Dendritic cell treated with granulocyte-macrophage colony-stimulating factor and Interleukin-4, amounts not matched to agents 40 ng/mL and 50 ng/mL, for 4 days (primary cell): ENCODE measurements at regions of chr17 and their contacts with region 1.

Region 1: DNA sequence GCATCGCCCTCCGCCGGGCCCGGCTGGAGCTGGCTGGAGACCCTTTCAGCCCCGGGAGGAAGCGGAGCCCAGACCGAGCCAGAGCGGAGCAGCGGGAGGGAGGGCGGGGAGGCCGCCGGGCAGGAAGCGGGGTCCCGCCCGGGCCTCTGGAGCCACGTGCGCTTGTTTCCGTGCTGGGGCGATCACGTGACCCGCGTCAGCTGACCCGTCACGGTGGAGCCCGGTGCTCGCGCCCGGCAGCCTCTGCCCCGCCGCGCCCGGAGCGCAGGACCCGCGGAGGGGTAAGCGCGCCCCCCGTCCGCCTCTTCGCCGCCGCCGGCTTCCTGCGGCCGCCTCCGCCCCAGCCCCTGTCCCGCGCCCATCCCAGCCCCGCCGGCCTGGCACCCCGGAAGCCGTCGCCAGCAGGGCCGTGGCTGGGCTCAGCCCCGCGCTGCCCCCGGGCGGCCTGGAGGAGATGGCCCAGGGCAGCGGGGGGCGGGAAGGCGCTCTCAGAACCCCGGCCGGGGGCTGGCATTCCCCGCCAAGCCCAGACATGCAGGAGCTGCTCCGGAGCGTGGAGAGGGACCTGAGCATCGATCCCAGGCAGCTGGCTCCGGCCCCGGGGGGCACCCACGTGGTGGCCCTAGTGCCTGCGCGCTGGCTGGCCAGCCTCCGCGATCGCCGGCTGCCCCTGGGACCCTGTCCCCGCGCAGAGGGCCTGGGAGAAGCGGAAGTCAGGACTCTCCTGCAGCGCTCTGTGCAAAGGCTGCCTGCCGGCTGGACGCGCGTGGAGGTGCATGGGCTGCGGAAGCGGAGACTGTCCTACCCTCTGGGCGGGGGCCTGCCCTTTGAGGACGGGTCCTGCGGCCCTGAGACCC is at the start of gene WDR81:
- H3K4me3 Mint-ChIP-seq: peak within 1 kb of the TSS; percentile 88
- H3K27ac Mint-ChIP-seq: peak within 1 kb of the TSS; percentile 88
- H3K4me1 Mint-ChIP-seq: peaks cover 78% of the 10 kb centered on the region
- H3K27me3 Mint-ChIP-seq: no peaks in the 10 kb centered on the region

Region 2: DNA sequence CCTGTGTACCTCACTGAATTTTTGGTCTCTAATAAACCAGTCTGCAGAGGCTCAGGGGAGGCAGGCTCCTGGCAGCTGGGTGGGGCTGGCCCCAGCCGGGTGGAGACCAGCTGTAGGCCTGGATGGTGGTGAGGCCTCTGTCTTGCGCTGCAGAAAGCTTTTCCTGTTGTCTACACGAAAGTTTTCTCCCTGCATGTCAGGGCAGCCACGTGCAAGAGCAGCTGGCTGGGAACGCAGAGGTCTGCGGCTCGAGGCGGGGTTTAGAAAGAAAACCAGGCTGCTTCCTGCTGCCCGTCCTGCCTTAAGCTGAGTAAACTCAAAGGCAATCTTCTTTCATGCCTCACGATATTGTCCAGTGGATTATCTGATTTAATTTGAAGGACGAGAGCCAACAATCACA is 39.5 kb after region 1 on chr17:
- intact Hi-C with region 1: loop called (anchors 5 kb)
- H3K4me3 Mint-ChIP-seq: peak overlapping the region; percentile 46
- H3K27ac Mint-ChIP-seq: peak overlapping the region; percentile 97
- H3K4me1 Mint-ChIP-seq: peaks cover 55% of the 10 kb centered on the region
- H3K27me3 Mint-ChIP-seq: peaks cover 2% of the 10 kb centered on the region